ENCODE measurements at regions of chr1 and their contacts with region 1.

Region 1: GRCh38 chr1:246002725-246003441 is 504.2 kb downstream of the SMYD3 start:
- DNase-seq: peak; percentile 76 to 91 (median 85)
- ATAC-seq: peak in 3 of 4 donors; percentile 75 to 80 (median 77)
- H3K4me3 ChIP-seq: no peak overlapping the region
- H3K27ac ChIP-seq: no peak overlapping the region
- H3K4me1 ChIP-seq: peaks cover 0 to 9% (median 0%) of the 10 kb centered on the region in 12 donors
- H3K27me3 ChIP-seq: no peaks in the 10 kb centered on the region
- CTCF ChIP-seq: peak; percentile 77 to 95 (median 86)
- POLR2A ChIP-seq: no peak

Region 2: GRCh38 chr1:245370905-245371581 is 631.8 kb before region 1 on chr1:
- intact Hi-C with region 1: loop called in 2 of 10 experiments (anchors 10 kb)
- DNase-seq: peak in 4 of 5 donors; percentile 23 to 79 (median 43)
- ATAC-seq: peak; percentile 89 to 98 (median 94)
- H3K4me3 ChIP-seq: no peak overlapping the region
- H3K27ac ChIP-seq: no peak overlapping the region
- H3K4me1 ChIP-seq: peaks cover 0 to 13% (median 2%) of the 10 kb centered on the region in 12 donors
- H3K27me3 ChIP-seq: peaks cover 0 to 6% (median 0%) of the 10 kb centered on the region in 9 donors
- CTCF ChIP-seq: no peak
- POLR2A ChIP-seq: no peak

Region 3: GRCh38 chr1:245687594-245688535 is 315.0 kb before region 1 on chr1:
- intact Hi-C with region 1: loop called in 2 of 10 experiments (anchors 5 to 10 kb)
- DNase-seq: no peak
- ATAC-seq: no peak
- H3K4me3 ChIP-seq: no peak overlapping the region
- H3K27ac ChIP-seq: no peak overlapping the region
- H3K4me1 ChIP-seq: peaks cover 0 to 12% (median 6%) of the 10 kb centered on the region in 12 donors
- H3K27me3 ChIP-seq: peaks cover 0 to 8% (median 0%) of the 10 kb centered on the region in 9 donors
- CTCF ChIP-seq: no peak
- POLR2A ChIP-seq: no peak

Region 4: GRCh38 chr1:245829826-245830225 is 173.1 kb before region 1 on chr1:
- intact Hi-C with region 1: loop called in 9 of 10 experiments (anchors 1 to 10 kb)
- DNase-seq: no peak
- ATAC-seq: no peak
- H3K4me3 ChIP-seq: no peak overlapping the region
- H3K27ac ChIP-seq: no peak overlapping the region
- H3K4me1 ChIP-seq: peaks cover 0 to 6% (median 0%) of the 10 kb centered on the region in 12 donors
- H3K27me3 ChIP-seq: no peaks in the 10 kb centered on the region
- CTCF ChIP-seq: no peak
- POLR2A ChIP-seq: no peak

Region 5: GRCh38 chr1:245888809-245889208 is 114.1 kb before region 1 on chr1:
- intact Hi-C with region 1: loop called in 1 of 10 experiments (anchors 10 kb)
- DNase-seq: no peak
- ATAC-seq: no peak
- H3K4me3 ChIP-seq: no peak overlapping the region
- H3K27ac ChIP-seq: no peak overlapping the region
- H3K4me1 ChIP-seq: no peaks in the 10 kb centered on the region
- H3K27me3 ChIP-seq: no peaks in the 10 kb centered on the region
- CTCF ChIP-seq: peak in 5 of 12 donors; percentile 13 to 24 (median 17)
- POLR2A ChIP-seq: no peak

Region 6: DNA sequence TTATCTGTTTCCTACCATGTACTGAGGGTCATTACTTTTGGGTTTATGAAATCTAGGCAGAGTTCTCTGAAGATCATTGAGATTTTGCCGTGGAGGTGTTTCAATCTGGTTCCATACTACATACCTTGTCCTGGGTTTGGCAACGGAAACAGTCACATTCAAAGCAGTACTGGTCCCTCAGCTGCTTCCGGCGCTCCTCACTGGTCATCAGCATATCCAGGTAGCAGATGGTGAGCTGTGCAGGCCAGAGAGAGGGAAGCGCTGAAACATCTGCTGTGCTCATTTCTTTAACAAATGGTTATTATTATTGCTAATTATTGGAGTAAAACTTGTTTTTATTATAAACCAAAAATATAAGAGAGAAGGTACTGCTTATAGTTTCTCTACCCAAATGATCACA is 87.5 kb before region 1 on chr1:
- intact Hi-C with region 1: no loop called
- DNase-seq: no peak
- ATAC-seq: no peak
- H3K4me3 ChIP-seq: no peak overlapping the region
- H3K27ac ChIP-seq: no peak overlapping the region
- H3K4me1 ChIP-seq: no peaks in the 10 kb centered on the region
- H3K27me3 ChIP-seq: no peaks in the 10 kb centered on the region
- CTCF ChIP-seq: no peak
- POLR2A ChIP-seq: no peak

Region 7: GRCh38 chr1:245956225-245956624 is 46.7 kb before region 1 on chr1:
- intact Hi-C with region 1: no loop called
- DNase-seq: no peak
- ATAC-seq: no peak
- H3K4me3 ChIP-seq: no peak overlapping the region
- H3K27ac ChIP-seq: peak overlapping the region in 1 of 12 donors; percentile 33
- H3K4me1 ChIP-seq: peaks cover 0 to 16% (median 4%) of the 10 kb centered on the region in 12 donors
- H3K27me3 ChIP-seq: no peaks in the 10 kb centered on the region
- CTCF ChIP-seq: no peak
- POLR2A ChIP-seq: no peak